Common myeloid progenitor, CD34-positive (primary cell): ENCODE measurements at regions of chr3 and their contacts with region 1.

Region 1: DNA sequence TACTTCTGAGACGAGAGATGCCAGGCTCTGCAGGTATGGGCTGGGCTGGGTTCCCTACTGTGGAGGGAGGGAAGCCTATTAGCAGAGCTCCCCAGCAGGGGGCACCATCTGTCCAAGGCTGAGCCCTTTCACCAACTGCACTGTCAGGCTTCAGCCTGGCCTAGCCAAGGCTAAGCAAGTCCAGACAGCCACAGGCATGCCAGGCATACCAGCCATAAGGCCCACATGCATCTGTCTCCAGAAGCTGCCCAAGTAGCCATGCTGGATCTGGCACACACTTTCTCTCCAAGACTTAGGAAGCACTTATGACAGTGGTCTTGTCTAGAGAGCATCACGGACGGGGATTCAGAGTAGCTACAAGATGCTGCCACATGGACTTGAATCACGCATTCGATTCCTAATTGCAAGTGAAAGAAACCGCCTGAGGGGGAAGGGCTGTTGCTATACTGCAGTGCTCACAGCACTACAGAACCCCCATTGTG is 28.3 kb downstream of the RUVBL1 start:
- DNase-seq: peak; percentile 71 to 83 (median 76)
- H3K4me3 ChIP-seq: no peak overlapping the region
- H3K27ac ChIP-seq: no peak overlapping the region
- H3K4me1 ChIP-seq: peaks cover 0 to 3% (median 0%) of the 10 kb centered on the region in 4 experiments
- H3K27me3 ChIP-seq: no peaks in the 10 kb centered on the region

Region 2: DNA sequence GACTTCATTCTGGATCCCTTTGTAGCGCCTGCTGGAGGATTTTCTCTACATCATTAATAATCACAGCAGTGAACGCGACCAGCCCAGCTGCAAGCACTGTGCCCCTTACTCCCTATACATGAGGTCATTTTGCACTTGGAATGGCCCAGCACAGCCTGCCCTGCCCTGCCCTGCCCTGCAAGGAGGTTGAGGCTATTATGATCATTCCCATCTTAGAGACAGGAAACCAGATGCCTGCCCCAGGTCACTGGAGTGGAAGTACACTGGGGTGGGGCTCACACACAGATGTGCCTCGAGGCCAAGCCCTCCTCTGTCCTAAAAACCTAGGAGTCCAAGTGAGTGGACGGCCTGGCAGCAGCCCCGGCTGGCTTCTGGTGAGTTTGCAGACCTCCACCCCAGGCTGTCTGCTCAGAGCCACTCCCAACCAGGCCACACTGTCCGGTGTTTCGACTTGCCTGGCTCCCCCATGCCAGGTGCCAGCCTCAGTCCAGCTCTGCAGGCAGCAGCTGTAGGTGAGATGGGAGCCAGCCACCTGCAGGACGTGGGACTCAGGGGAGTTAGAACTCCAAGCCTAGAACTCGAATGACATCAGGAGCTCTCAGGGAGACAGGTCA is 73.4 kb before region 1 on chr3:
- CTCF ChIA-PET with region 1: no interaction called
- POLR2A ChIA-PET with region 1: no interaction called
- DNase-seq: no peak
- H3K4me3 ChIP-seq: no peak overlapping the region
- H3K27ac ChIP-seq: no peak overlapping the region
- H3K4me1 ChIP-seq: no peaks in the 10 kb centered on the region
- H3K27me3 ChIP-seq: peaks cover 0 to 12% (median 0%) of the 10 kb centered on the region in 5 experiments

Region 3: GRCh38 chr3:128123538-128124368 is 28.5 kb after region 1 on chr3 and contains the start of gene RUVBL1:
- CTCF ChIA-PET with region 1: interaction called, 10 read pairs
- POLR2A ChIA-PET with region 1: no interaction called
- DNase-seq: peak; percentile 98 to 99 (median 98)
- H3K4me3 ChIP-seq: peak within 1 kb of the TSS; percentile 66 to 99 (median 97)
- H3K27ac ChIP-seq: peak within 1 kb of the TSS; percentile 82 to 91
- H3K4me1 ChIP-seq: peaks cover 7 to 20% (median 10%) of the 10 kb centered on the region in 4 experiments
- H3K27me3 ChIP-seq: peaks cover 0 to 2% (median 0%) of the 10 kb centered on the region in 5 experiments

Region 4: GRCh38 chr3:128133273-128134084 is 38.2 kb after region 1 on chr3:
- CTCF ChIA-PET with region 1: interaction called, 11 read pairs
- POLR2A ChIA-PET with region 1: no interaction called
- DNase-seq: peak; percentile 52 to 65 (median 63)
- H3K4me3 ChIP-seq: no peak overlapping the region
- H3K27ac ChIP-seq: no peak overlapping the region
- H3K4me1 ChIP-seq: no peaks in the 10 kb centered on the region
- H3K27me3 ChIP-seq: peaks cover 0 to 3% (median 0%) of the 10 kb centered on the region in 5 experiments